SK-N-SH (cell line): ENCODE measurements at regions of chr1 and their contacts with region 1.

Region 1: DNA sequence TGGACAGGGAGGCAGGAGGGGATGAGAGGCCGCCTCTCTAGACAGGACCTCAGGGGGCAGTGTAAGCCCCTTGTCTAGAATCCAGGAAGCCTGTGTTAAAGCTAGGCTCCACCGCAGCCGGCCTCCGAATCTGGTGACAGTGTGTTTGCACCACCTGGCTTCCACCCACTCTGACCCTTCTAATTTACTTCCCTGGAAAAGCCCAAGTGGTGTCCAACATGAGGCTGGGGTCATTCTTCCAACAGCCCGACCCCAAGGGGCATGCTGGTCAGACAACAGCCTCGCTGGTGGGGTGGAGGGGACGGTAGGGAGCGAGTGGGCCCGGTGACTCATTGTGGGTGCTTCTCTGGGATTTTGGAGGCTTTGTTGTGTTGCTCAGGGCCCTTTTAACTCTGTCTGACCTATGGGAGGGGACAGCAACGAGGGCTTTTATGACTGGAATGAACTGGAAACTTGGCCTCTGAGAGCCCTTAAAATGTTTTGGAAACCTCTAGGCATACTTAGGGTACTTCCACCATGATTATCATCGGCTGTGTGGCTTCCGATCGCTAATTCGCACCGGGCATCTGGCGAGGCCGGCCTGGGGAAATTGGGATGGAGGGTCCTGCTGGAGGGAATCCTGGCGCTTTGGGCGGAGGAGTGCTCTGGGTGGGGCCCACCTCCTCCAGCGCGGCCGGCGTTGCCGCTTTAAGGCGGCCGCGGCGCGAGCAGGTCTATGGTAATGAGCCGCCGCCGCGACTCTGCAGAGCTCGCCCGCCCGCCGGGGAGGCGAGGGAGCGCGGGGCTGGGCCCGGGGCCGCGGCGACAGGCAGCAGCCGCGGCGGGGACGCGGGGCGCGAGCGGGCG is at the start of gene CELSR2:
- DNase-seq: peak; percentile 95
- H3K4me3 ChIP-seq: peak within 1 kb of the TSS; percentile 58 to 70
- H3K27ac ChIP-seq: peak within 1 kb of the TSS in 1 of 2 experiments; percentile 62; a peak in 1 of 4 replicates
- H3K4me1 ChIP-seq: peaks cover 0 to 31% of the 10 kb centered on the region in 2 experiments; a peak in 1 of 4 replicates
- H3K27me3 ChIP-seq: no peaks in the 10 kb centered on the region
- CTCF ChIP-seq: no peak; the same call in 1 of the 2 replicates
- EP300 ChIP-seq: no peak
- RAD21 ChIP-seq: no peak
- polyA plus RNA-seq, gene CELSR2: 1.7 and 3.5 TPM in 2 replicates

Region 2: DNA sequence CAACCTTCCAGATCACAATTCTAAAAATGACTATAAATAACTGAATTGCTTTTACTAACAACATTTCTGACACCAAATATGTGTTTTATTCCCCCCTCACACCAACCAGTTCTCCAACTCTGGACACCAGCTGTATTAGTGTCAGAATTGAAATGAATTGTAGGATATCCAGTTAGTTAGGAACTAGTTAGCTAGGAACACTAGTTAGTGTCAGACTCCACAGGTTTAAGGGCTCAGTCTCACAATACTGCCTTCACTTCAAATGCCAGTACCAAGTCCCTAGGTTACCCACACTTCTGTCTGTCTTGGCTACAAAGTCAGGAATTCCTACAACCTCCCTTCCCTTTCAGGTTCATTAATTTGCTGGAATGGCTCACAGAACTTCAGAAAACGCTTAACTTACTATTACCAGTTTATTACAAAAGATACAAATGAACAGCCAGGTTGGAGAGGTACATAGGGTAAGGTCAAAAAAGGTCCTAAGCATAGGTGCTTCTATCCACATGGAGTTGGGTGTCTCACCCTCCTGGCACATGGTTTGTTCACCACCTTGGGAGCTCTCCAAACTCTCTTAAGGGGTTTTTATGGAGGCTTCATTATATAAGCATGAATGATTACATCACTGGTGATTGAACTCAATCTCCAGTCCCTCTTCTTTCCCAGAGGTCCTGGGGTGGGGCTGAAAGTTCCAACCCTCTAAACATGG is 498.4 kb before region 1 on chr1:
- CTCF ChIA-PET with region 1: no interaction called
- POLR2A ChIA-PET with region 1: no interaction called
- DNase-seq: no peak
- H3K4me3 ChIP-seq: no peak overlapping the region
- H3K27ac ChIP-seq: no peak overlapping the region
- H3K4me1 ChIP-seq: peaks cover 4 to 5% of the 10 kb centered on the region in 2 experiments; a peak in 3 of 4 replicates
- H3K27me3 ChIP-seq: no peaks in the 10 kb centered on the region
- CTCF ChIP-seq: no peak
- EP300 ChIP-seq: no peak
- RAD21 ChIP-seq: no peak

Region 3: GRCh38 chr1:108983114-108983513 is 265.9 kb before region 1 on chr1:
- CTCF ChIA-PET with region 1: no interaction called
- POLR2A ChIA-PET with region 1: no interaction called
- DNase-seq: no peak
- H3K4me3 ChIP-seq: no peak overlapping the region
- H3K27ac ChIP-seq: no peak overlapping the region
- H3K4me1 ChIP-seq: no peaks in the 10 kb centered on the region
- H3K27me3 ChIP-seq: no peaks in the 10 kb centered on the region
- CTCF ChIP-seq: no peak
- EP300 ChIP-seq: no peak
- RAD21 ChIP-seq: no peak

Region 4: GRCh38 chr1:109213785-109214468 is 35.1 kb before region 1 on chr1 and contains the start of gene SARS1:
- CTCF ChIA-PET with region 1: interaction called, 4 read pairs
- POLR2A ChIA-PET with region 1: interaction called, 11 read pairs
- DNase-seq: peak; percentile 97
- H3K4me3 ChIP-seq: peak within 1 kb of the TSS; percentile 88 to 89
- H3K27ac ChIP-seq: peak within 1 kb of the TSS; percentile 86 to 89
- H3K4me1 ChIP-seq: peaks cover 5 to 21% of the 10 kb centered on the region in 2 experiments; a peak in 3 of 4 replicates
- H3K27me3 ChIP-seq: no peaks in the 10 kb centered on the region
- CTCF ChIP-seq: no peak
- EP300 ChIP-seq: no peak
- RAD21 ChIP-seq: no peak
- polyA plus RNA-seq, gene SARS1: 98.3 and 106 TPM in 2 replicates

Region 5: DNA sequence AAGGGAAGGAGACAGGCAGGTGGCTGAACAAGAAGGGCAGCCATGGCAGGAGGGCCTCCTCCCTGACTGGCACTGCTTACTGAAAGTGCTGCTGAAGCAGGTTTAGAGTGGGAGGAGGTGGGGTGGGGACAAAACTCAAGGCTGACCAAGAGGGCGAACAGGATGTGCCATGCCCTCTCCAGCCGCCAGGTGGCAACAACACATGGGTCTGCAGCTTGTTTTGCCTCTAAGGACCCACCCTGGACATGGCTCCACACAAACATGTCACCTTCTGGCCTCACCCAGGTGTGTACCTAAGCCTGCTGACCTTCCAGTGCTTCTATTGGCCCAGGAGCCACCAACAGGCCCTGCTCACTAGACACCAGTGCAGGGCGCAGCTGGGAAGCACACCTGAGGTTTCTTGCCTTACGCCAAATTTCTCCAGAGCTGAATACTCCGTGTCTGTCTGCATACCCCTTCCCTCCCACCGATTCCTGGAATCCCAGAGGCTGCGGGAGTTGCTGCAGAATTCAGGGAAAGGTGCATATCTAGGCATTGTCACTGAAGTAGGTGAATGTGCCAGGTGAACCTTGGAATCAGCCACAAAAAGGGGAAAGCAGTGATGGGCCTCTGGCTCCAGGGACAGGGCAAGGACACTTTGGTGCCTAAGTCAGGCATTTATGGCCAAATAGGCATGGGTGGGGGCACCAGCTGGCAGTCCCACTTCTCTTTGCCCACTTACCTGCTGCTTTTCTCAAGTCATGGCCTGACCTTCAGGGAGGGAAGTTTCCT is 28.6 kb after region 1 on chr1:
- CTCF ChIA-PET with region 1: interaction called, 12 read pairs
- POLR2A ChIA-PET with region 1: interaction called, 5 read pairs
- DNase-seq: peak; percentile 88
- H3K4me3 ChIP-seq: no peak overlapping the region; a peak in 1 of 4 replicates
- H3K27ac ChIP-seq: peak overlapping the region in 1 of 2 experiments; percentile 44; a peak in 2 of 4 replicates
- H3K4me1 ChIP-seq: peaks cover 15 to 38% of the 10 kb centered on the region in 2 experiments
- H3K27me3 ChIP-seq: no peaks in the 10 kb centered on the region
- CTCF ChIP-seq: peak; percentile 90
- EP300 ChIP-seq: no peak
- RAD21 ChIP-seq: peak; percentile 77